ENCODE measurements at regions of chr17 and their contacts with region 1.

Region 1: GRCh38 chr17:8572764-8573163 is 57.8 kb downstream of the MYH10 start:
- DNase-seq: no peak
- ATAC-seq: no peak
- H3K4me3 ChIP-seq: no peak overlapping the region
- H3K27ac ChIP-seq: no peak overlapping the region
- H3K4me1 ChIP-seq: no peaks in the 10 kb centered on the region
- H3K27me3 ChIP-seq: no peaks in the 10 kb centered on the region
- CTCF ChIP-seq: peak in 1 of 5 experiments; percentile 26
- POLR2A ChIP-seq: no peak

Region 2: DNA sequence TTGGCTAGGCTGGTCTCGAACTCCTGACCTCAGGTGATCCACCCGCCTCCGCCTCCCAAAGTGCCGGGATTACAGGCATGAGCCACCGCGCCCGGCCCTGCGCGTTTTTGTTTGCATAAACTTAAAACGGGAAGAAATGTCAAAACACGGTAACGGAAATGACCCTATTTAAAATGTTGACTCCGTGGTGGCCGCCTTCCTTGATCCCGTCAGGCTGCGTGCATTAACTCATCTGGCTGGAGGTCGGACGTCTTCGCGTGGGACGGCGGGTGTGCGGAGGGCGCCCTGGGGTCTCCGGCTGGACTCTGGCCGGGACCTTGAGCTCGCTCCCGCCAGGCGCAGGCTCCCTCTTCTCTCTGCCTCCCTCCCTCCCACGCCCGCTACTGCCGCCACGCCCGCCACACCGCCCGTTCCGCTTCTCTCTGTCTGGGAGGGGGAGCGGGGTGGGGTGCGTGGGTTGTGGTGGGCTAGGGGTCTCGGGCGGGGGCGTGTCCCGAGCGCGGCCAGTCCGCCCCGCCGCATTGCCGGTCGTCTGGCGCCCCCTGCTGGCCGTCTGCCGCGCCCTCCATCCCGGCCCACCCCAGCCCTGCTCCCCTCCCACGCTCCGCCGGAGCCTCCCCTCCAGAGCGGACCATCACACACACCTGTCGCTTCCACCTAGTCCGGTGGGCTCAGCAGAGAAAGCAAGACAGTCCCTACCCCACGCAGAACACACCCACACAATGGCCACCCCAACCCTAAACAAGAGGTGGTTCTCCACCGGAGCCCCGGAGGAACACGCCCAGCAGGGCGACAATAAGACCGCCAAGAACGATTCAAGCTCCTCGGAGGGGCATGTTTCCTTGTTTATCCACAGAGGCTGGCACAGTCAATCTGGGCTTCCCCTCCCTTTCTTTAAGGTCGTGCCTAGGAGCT is 173.1 kb after region 1 on chr17:
- in situ Hi-C with region 1: loop called in 3 of 4 experiments (anchors 10 to 25 kb)
- intact Hi-C with region 1: loop called (anchors 10 kb)
- DNase-seq: peak; percentile 21 to 22
- ATAC-seq: peak; percentile 66 to 73
- H3K4me3 ChIP-seq: peak overlapping the region; percentile 62 to 73 (median 66)
- H3K27ac ChIP-seq: peak overlapping the region in 1 of 4 donors; percentile 33
- H3K4me1 ChIP-seq: peaks cover 0 to 10% of the 10 kb centered on the region in 2 donors
- H3K27me3 ChIP-seq: peaks cover 0 to 2% (median 0%) of the 10 kb centered on the region in 3 donors
- CTCF ChIP-seq: peak; percentile 46 to 96 (median 82)
- POLR2A ChIP-seq: no peak